GM13976 (cell line): ENCODE measurements at regions of chr4 and their contacts with region 1.

Region 1: GRCh38 chr4:95124906-95125504 is 367.2 kb downstream of the BMPR1B start:
- DNase-seq: no peak
- CTCF ChIP-seq: no peak

Region 2: GRCh38 chr4:94641702-94642560 is 483.1 kb before region 1 on chr4:
- in situ Hi-C with region 1: loop called (anchors 25 kb)
- DNase-seq: no peak
- CTCF ChIP-seq: no peak

Region 3: DNA sequence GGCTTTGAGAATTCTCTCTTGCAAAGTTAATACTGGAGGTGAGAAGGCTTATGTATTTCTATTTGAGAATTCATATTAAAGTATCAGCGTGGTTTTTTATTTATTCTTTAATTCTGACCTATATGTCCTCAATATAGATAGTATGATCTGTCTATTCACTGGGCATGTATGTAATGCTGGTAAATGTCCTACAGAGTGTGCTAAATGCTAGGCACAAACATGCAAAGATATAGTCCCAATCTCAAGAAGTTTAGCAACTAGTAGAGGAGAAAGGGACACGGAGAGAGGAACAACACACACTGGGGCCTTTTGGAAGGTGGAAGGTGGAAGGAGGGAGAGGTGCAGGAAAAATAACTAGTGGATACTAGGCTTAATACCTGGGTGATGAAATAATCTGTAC is 378.3 kb before region 1 on chr4:
- in situ Hi-C with region 1: no loop called
- DNase-seq: no peak
- CTCF ChIP-seq: no peak

Region 4: GRCh38 chr4:94870146-94870545 is 254.9 kb before region 1 on chr4:
- in situ Hi-C with region 1: no loop called
- DNase-seq: no peak
- CTCF ChIP-seq: no peak

Region 5: DNA sequence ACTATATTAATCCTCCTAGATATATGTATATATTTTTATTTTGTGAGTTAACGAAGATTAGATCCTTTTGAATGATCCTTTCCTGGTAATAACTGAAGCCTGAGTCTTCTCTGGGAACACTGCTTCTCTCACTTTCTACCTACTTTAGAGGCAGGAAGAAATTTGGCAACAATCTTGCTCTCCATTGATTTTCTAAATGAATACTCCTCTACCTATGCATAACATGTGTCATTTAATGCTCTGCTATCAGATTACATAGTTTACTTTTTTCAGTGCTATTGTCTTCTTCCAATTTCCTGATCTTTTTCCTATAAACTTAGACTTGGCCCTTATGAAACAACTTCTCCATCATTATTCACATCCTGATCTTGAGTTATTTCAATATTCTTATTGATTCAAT is 654.4 kb after region 1 on chr4:
- in situ Hi-C with region 1: no loop called
- DNase-seq: no peak
- CTCF ChIP-seq: no peak